ENCODE measurements at regions of chr3 and their contacts with region 1.

Region 1: GRCh38 chr3:12948891-12949711 is 107.7 kb upstream of the RPL32 start:
- DNase-seq: peak; percentile 48
- ATAC-seq: peak; percentile 9; the same call in 1 of the 2 replicates
- H3K4me3 ChIP-seq: no peak overlapping the region
- H3K27ac ChIP-seq: no peak overlapping the region
- H3K4me1 ChIP-seq: peaks cover 21% of the 10 kb centered on the region
- H3K27me3 ChIP-seq: no peaks in the 10 kb centered on the region
- CTCF ChIP-seq: 0 out of 2 replicates have a peak, but pooled peaks have one; percentile 4
- POLR2A ChIP-seq: no peak
- RAD21 ChIP-seq: no peak

Region 2: DNA sequence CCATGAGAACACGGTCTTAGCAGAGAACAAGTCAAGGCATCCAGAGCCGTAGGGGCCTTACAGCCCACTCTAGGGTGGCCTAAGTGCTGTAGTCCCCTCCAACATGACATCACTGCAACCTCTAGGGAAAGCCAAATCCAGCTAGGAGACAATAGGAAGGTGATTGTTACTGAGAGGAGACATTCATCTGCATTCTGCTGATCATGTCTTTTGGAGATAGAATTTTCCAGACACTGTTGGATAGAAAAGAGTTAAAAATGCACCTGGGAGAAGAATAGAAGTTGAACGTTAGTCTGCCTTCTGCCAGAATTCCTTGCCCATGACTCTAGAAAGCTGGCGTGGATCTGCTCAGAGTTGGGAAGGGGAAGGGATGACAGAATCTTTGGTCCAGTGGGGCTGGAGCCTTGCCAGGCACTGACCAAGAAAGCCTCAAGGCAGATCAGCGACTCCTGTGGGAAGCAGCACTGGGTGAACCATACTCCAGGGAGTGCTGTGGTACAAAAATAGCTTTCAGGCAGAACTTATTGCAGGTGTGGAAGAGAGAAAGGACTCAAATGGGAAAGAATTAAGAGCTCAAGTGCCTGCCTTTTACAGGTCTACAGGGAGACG is 240.4 kb before region 1 on chr3:
- CTCF ChIA-PET with region 1: no interaction called
- POLR2A ChIA-PET with region 1: no interaction called
- dilution Hi-C with region 1: no loop called
- in situ Hi-C with region 1: no loop called
- intact Hi-C with region 1: no loop called
- DNase-seq: peak; percentile 94
- ATAC-seq: peak; percentile 83
- H3K4me3 ChIP-seq: no peak overlapping the region
- H3K27ac ChIP-seq: no peak overlapping the region
- H3K4me1 ChIP-seq: peaks cover 3% of the 10 kb centered on the region; the same call in 1 of the 2 replicates
- H3K27me3 ChIP-seq: peaks cover 8% of the 10 kb centered on the region; the same call in 1 of the 2 replicates
- CTCF ChIP-seq: peak; percentile 51
- POLR2A ChIP-seq: no peak
- RAD21 ChIP-seq: peak; percentile 55

Region 3: DNA sequence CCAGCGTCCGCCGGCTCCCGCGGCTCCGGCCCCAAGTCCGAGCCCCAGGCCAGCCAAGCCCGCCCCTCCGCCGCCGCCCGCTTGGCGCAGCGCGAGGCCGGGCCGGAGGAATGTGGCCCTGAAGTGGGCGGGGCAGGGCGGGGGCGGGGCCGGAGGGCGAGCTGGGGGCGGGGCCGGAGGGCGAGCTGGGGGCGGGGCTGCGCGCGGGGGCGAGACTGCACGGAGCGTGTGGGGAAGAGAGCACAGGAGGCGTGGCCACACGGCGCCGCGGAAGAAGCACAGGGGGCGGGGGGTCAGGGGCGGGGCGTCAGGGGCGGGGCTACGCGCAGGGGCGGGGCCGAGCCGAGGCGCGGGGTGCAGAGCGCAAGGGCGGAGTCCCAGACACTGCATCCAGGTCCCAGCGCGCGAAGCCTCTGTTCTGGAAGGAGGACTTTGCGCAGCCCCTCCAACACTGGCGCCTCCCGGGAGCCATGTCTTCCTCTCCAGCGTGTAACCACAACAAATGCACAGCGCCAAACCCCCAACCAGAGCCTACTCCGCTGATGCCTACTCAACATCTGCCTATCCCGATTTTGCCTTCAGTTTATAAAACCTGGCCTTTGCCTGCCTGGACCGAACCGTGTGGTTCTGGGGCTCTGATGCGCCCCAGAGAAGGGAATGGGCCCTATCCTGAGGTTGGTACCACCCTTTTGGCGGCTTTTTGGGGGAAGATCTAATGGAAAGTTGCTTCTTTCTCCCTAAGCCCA is 18.7 kb after region 1 on chr3:
- CTCF ChIA-PET with region 1: no interaction called
- POLR2A ChIA-PET with region 1: no interaction called
- dilution Hi-C with region 1: no loop called
- in situ Hi-C with region 1: no loop called
- intact Hi-C with region 1: loop called (anchors 2 kb)
- DNase-seq: peak; percentile 83
- ATAC-seq: peak; percentile 91
- H3K4me3 ChIP-seq: peak overlapping the region; percentile 64
- H3K27ac ChIP-seq: peak overlapping the region; percentile 77
- H3K4me1 ChIP-seq: peaks cover 22% of the 10 kb centered on the region
- H3K27me3 ChIP-seq: no peaks in the 10 kb centered on the region
- CTCF ChIP-seq: no peak
- POLR2A ChIP-seq: peak; percentile 50
- RAD21 ChIP-seq: no peak

Measured in IMR-90 (cell line).